Activated CD4-positive, alpha-beta T cell treated with anti-CD3 and anti-CD28 coated beads, Interleukin-2, amount 10 ng/mL, durations not matched to agents 24 days and 14 days (primary cell): ENCODE measurements at regions of chr3 and their contacts with region 1.

Region 1: GRCh38 chr3:72439321-72440183 is 408.7 kb downstream of the SHQ1 start:
- DNase-seq: peak; percentile 42
- H3K4me3 Mint-ChIP-seq: no peak overlapping the region
- H3K27ac Mint-ChIP-seq: no peak overlapping the region
- H3K4me1 Mint-ChIP-seq: peaks cover 75% of the 10 kb centered on the region
- H3K27me3 Mint-ChIP-seq: no peaks in the 10 kb centered on the region

Region 2: DNA sequence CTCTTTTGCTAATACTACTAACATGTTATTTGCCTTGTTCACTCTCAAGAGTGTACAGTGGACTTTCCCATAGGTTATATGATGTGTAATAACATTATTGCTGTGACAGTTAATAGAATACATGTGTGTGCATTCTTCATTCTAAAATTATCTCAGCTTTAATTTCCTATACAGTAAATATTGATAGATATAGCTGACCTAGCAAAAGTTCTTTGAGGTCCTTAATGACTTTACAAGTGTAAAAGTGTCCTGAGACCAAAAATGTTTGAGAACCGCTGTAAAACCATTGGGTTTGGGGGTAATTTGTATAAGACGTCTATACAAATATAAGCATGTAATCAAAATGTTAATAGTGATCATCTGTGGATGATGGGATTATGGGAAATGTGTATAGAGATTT is 185.1 kb before region 1 on chr3:
- intact Hi-C with region 1: no loop called
- DNase-seq: no peak
- H3K4me3 Mint-ChIP-seq: no peak overlapping the region
- H3K27ac Mint-ChIP-seq: no peak overlapping the region
- H3K4me1 Mint-ChIP-seq: peaks cover 14% of the 10 kb centered on the region
- H3K27me3 Mint-ChIP-seq: peaks cover 19% of the 10 kb centered on the region

Region 3: DNA sequence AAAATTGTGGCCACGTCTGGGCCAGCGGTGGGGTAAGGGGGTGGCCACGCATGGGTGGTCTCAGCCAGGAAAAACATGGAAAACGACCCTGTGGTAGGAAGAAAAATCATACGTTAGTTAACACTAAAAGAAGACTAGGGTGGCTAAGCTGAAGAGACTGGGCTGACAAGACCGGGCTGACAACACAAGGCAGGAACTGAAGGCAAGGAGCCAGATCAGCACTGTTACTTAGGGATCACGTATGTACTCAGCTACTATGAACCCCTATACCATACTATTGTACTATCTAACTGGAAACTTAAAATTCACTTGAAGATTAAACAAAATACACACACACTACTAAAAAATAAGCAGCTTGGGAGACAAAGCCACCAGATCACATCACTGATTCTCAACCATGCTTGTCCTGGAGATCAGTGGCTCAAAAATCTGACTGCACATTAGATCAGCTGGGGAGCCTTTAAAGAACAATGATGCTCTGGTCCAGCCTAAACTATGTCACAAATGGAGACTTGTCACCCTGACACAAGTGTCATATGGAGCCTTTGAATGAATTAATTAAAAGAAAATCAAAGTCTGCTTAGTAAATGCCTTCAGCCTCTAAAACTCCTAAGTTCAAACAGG is 33.5 kb before region 1 on chr3:
- intact Hi-C with region 1: loop called (anchors 5 kb)
- DNase-seq: no peak
- H3K4me3 Mint-ChIP-seq: no peak overlapping the region
- H3K27ac Mint-ChIP-seq: no peak overlapping the region
- H3K4me1 Mint-ChIP-seq: peaks cover 61% of the 10 kb centered on the region
- H3K27me3 Mint-ChIP-seq: no peaks in the 10 kb centered on the region